WTC11 (cell line): ENCODE measurements at regions of chrX and their contacts with region 1.

Region 1: GRCh38 chrX:41275661-41276609 is 58.0 kb upstream of the DDX3X start:
- DNase-seq: peak; percentile 54
- ATAC-seq: peak; percentile 69
- H3K4me3 Mint-ChIP-seq: peak overlapping the region; percentile 68
- H3K27ac Mint-ChIP-seq: no peak overlapping the region
- H3K4me1 Mint-ChIP-seq: peaks cover 12% of the 10 kb centered on the region
- H3K27me3 Mint-ChIP-seq: no peaks in the 10 kb centered on the region
- CTCF ChIP-seq: no peak

Region 2: GRCh38 chrX:41750716-41751115 is 474.8 kb after region 1 on chrX:
- CTCF ChIA-PET with region 1: no interaction called
- POLR2A ChIA-PET with region 1: interaction called, 11 read pairs
- DNase-seq: no peak
- ATAC-seq: no peak
- H3K4me3 Mint-ChIP-seq: no peak overlapping the region
- H3K27ac Mint-ChIP-seq: no peak overlapping the region
- H3K4me1 Mint-ChIP-seq: no peaks in the 10 kb centered on the region
- H3K27me3 Mint-ChIP-seq: no peaks in the 10 kb centered on the region
- CTCF ChIP-seq: no peak